Pancreas (tissue), 10 donors: ENCODE measurements at regions of chr6 and their contacts with region 1.

Region 1: DNA sequence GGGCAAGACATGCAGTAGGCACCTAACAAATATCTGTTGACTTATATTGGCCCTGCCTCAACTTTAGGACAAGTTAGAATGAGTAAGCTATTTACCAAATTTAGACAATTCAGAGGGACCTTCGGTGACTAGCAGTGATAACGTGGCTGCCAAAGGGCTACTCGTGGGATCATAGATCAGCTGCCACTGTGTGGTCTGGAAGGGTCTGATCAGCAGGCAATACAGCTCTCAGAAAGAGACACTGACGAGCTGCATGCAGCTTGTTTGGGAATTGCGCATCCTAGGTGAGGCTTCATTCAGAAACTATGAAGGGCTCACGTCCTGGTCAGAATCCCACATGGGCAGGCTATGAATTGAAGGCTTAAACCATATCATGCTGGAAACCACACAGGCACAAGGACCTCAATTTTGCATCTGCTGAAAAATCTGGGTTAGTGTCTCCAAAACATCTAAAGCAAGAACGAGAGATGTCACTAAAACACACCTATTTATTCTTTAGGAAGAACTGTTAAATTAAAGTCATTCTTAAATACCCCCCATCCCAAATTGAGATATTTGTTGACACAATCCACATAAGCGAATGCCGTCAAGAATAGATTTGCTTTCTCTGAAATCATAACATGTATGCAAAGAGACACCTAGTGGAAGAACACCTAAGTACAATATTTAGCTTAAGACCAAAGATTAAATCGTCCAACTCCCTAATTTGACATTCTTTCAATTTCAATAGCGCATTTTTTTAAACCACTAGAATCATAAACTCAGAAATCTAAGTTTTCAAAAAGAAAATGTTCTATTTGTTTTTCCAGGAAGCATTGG is 79.6 kb downstream of the IPCEF1 start:
- DNase-seq: no peak
- ATAC-seq: peak; percentile 66 to 90 (median 81)
- H3K4me3 ChIP-seq: peak overlapping the region in 1 of 4 donors; percentile 24
- H3K27ac ChIP-seq: no peak overlapping the region
- H3K4me1 ChIP-seq: peaks cover 0 to 5% (median 0%) of the 10 kb centered on the region in 3 donors
- H3K27me3 ChIP-seq: no peaks in the 10 kb centered on the region
- CTCF ChIP-seq: peak; percentile 22 to 49 (median 38)

Region 2: DNA sequence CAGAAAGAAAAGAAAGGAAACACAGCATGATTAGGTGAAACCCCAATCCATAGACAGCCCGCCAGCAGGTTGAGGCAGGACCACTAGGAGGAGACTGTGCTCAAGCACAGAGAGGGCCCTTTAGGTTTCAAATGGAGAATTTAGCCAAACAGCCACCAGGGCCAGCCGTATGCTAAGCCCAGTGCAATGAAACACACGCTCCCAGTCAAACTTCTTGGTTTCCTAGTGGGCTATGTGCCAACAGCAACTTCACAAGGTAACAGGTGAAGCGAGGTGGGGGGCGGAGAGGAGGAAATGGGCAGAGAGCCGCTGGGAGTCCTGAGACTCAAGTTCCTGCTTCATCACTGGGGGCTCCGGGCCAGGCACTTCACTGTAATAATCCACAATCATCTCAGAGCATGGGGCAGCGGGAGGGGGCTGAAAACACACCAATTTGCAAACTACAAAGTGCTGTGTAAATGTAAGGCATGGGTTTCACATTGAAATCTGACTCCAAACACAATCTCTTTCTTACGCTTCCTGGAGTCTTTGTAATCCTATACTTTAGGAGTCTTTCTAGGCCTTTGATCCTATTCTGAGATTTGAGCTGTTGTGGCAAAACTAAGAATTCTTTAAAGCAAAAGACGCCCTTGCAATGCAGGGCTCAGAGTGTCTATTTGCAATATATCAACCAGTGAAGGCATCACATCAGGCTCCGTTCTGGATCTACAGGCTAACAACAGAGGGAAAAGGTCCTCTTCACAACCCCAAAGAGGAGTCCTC is 120.7 kb before region 1 on chr6:
- intact Hi-C with region 1: loop called in 2 of 3 experiments (anchors 5 to 10 kb)
- DNase-seq: peak in 3 of 6 donors; percentile 22 to 46 (median 40)
- ATAC-seq: peak; percentile 40 to 86 (median 80)
- H3K4me3 ChIP-seq: no peak overlapping the region
- H3K27ac ChIP-seq: peak overlapping the region in 1 of 4 donors; percentile 15
- H3K4me1 ChIP-seq: no peaks in the 10 kb centered on the region
- H3K27me3 ChIP-seq: no peaks in the 10 kb centered on the region
- CTCF ChIP-seq: peak in 1 of 4 donors; percentile 21